ENCODE measurements at regions of chr2 and their contacts with region 1.

Region 1: GRCh38 chr2:105888625-105889400 is 144.1 kb downstream of the NCK2 start:
- DNase-seq: no peak
- ATAC-seq: peak in 1 of 2 donors; percentile 30
- H3K4me3 Mint-ChIP-seq: peak overlapping the region in 1 of 10 donors; percentile 20
- H3K27ac Mint-ChIP-seq: peak overlapping the region; percentile 0 to 87 (median 51)
- H3K4me1 Mint-ChIP-seq: peaks cover 46 to 75% (median 70%) of the 10 kb centered on the region in 4 donors
- H3K27me3 Mint-ChIP-seq: no peaks in the 10 kb centered on the region

Region 2: DNA sequence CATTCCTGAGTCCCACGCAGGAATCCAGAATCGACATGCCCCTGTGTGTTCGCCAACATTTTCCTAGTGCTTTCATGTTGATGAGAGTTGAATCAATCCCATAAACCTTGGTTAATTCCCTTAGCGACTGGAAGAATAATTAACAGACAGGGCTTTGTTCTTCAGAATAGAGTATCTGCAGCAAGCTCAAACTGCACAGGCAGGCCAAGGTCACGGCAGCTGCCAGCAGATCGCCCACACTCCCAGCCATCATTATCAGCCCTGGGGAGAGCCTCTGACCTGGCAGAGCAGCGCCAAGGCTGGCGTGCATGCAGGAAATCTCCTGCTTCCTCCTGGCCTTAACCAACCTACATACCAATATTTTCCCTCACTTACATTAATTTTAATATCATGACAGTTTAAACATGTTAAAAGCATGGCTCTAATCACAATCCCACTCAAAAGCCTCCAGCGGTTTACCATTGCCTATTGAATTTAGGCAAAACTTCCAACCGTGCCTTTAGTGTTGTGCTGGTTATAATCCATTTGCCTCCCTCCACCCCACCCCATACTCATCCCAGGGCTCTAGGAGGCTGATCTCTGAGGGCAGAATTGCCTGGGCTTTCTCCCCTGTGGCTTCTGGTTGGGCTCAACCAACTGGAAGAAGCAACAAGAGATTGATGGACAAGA is 190.9 kb before region 1 on chr2:
- POLR2A ChIA-PET with region 1: no interaction called
- DNase-seq: no peak
- ATAC-seq: no peak
- H3K4me3 Mint-ChIP-seq: no peak overlapping the region
- H3K27ac Mint-ChIP-seq: peak overlapping the region in 1 of 10 donors; percentile 34
- H3K4me1 Mint-ChIP-seq: peaks cover 0 to 7% (median 0%) of the 10 kb centered on the region in 4 donors
- H3K27me3 Mint-ChIP-seq: peaks cover 0 to 4% (median 0%) of the 10 kb centered on the region in 5 donors

Region 3: GRCh38 chr2:105866216-105867185 is 22.3 kb before region 1 on chr2:
- POLR2A ChIA-PET with region 1: interaction called, 13 read pairs
- DNase-seq: no peak
- ATAC-seq: no peak
- H3K4me3 Mint-ChIP-seq: peak overlapping the region in 1 of 10 donors; percentile 27
- H3K27ac Mint-ChIP-seq: peak overlapping the region in 4 of 10 donors; percentile 32 to 86 (median 51)
- H3K4me1 Mint-ChIP-seq: peaks cover 53 to 98% (median 91%) of the 10 kb centered on the region in 4 donors
- H3K27me3 Mint-ChIP-seq: no peaks in the 10 kb centered on the region

Measured in naive thymus-derived CD8-positive, alpha-beta T cell (primary cell).